Activated CD8-positive, alpha-beta T cell treated with anti-CD3 and anti-CD28 coated beads, Interleukin-2, amount 10 ng/mL, durations not matched to agents 7 days and 5 days (primary cell): ENCODE measurements at regions of chr7 and their contacts with region 1.

Region 1: DNA sequence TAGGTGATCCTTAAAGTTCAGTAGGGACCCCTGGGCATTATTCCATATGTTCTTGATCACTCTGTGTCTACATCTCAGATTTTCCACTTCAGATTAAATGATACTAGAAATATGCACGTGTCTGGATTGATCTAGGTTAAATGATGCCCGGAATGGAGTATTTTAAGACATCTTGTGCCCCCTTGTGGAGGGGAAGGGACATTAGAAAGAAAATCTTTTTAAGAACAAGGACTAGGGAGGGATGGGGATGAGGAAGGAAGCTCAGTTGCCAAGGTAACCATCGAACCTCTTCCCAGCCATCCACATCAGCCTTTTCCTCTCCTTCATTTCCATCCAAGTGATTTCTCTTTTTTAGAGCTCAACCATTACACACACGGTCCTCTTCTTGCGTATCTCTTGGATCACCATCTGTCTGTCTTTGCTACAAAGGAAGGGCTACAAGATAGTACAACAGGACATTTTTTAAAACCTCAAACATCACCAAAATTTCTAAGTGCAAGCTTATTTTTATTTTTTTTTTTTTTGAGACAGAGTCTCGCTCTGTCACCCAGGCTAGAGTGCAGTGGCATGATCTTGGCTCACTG is 40.5 kb downstream of the PRSS2 start:
- DNase-seq: peak; percentile 71
- ATAC-seq: no peak
- H3K4me3 Mint-ChIP-seq: peak overlapping the region; percentile 54
- H3K27ac Mint-ChIP-seq: peak overlapping the region; percentile 88
- H3K4me1 Mint-ChIP-seq: peaks cover 72% of the 10 kb centered on the region
- H3K27me3 Mint-ChIP-seq: peaks cover 2% of the 10 kb centered on the region

Region 2: GRCh38 chr7:142301923-142302550 is 509.2 kb before region 1 on chr7:
- CTCF ChIA-PET with region 1: interaction called, 37 read pairs
- POLR2A ChIA-PET with region 1: interaction called, 5 read pairs
- DNase-seq: no peak
- ATAC-seq: peak; percentile 47
- H3K4me3 Mint-ChIP-seq: no peak overlapping the region
- H3K27ac Mint-ChIP-seq: no peak overlapping the region
- H3K4me1 Mint-ChIP-seq: peaks cover 14% of the 10 kb centered on the region
- H3K27me3 Mint-ChIP-seq: peaks cover 19% of the 10 kb centered on the region

Region 3: GRCh38 chr7:142523821-142524460 is 287.3 kb before region 1 on chr7:
- CTCF ChIA-PET with region 1: interaction called, 9 read pairs
- POLR2A ChIA-PET with region 1: interaction called, 16 read pairs
- DNase-seq: no peak
- ATAC-seq: no peak
- H3K4me3 Mint-ChIP-seq: no peak overlapping the region
- H3K27ac Mint-ChIP-seq: no peak overlapping the region
- H3K4me1 Mint-ChIP-seq: peaks cover 9% of the 10 kb centered on the region
- H3K27me3 Mint-ChIP-seq: peaks cover 3% of the 10 kb centered on the region

Region 4: DNA sequence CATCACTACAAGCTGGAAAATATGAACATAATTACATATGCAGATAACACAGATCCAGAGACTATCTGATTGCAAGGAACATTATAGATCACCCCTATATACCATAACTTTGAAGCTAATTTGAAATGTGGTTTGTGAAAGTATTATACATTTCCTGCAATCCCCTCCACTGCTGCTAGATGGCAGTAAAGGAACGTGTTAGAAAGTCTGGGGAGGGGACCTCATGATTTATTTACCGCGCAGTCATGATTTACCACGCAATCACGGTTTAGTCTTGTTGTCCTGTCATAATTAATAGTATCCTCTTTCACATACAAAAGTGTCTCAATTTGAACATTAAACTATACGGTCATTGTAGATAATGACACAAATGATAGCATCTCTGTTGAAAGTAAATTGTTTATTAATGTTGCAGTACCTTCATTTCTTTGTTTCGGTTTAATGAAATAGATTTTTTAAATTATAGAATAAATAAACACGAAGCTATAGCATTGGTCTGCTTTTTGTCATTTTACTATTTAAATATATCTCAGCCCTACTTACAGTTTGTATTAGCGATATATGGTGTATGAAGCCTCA is 207.3 kb before region 1 on chr7:
- CTCF ChIA-PET with region 1: interaction called, 22 read pairs
- POLR2A ChIA-PET with region 1: interaction called, 3 read pairs
- DNase-seq: peak; percentile 66
- ATAC-seq: peak; percentile 53
- H3K4me3 Mint-ChIP-seq: no peak overlapping the region
- H3K27ac Mint-ChIP-seq: no peak overlapping the region
- H3K4me1 Mint-ChIP-seq: peaks cover under 1% of the 10 kb centered on the region
- H3K27me3 Mint-ChIP-seq: peaks cover 12% of the 10 kb centered on the region

Region 5: GRCh38 chr7:142782922-142783900 is 28.0 kb before region 1 on chr7:
- CTCF ChIA-PET with region 1: interaction called, 584 read pairs
- POLR2A ChIA-PET with region 1: interaction called, 2,065 read pairs
- DNase-seq: peak; percentile 88
- ATAC-seq: peak; percentile 49
- H3K4me3 Mint-ChIP-seq: peak overlapping the region; percentile 63
- H3K27ac Mint-ChIP-seq: peak overlapping the region; percentile 89
- H3K4me1 Mint-ChIP-seq: peaks cover 41% of the 10 kb centered on the region
- H3K27me3 Mint-ChIP-seq: no peaks in the 10 kb centered on the region

Region 6: GRCh38 chr7:143008007-143008901 is 197.0 kb after region 1 on chr7:
- CTCF ChIA-PET with region 1: interaction called, 18 read pairs
- POLR2A ChIA-PET with region 1: no interaction called
- DNase-seq: peak; percentile 86
- ATAC-seq: peak; percentile 93
- H3K4me3 Mint-ChIP-seq: no peak overlapping the region
- H3K27ac Mint-ChIP-seq: no peak overlapping the region
- H3K4me1 Mint-ChIP-seq: peaks cover 2% of the 10 kb centered on the region
- H3K27me3 Mint-ChIP-seq: peaks cover 22% of the 10 kb centered on the region